ENCODE measurements at regions of chr11 and their contacts with region 1.

Region 1: GRCh38 chr11:117226388-117227385 is 5.2 kb downstream of the PCSK7 start:
- DNase-seq: peak; percentile 58
- H3K4me3 ChIP-seq: no peak overlapping the region
- H3K27ac ChIP-seq: no peak overlapping the region
- H3K4me1 ChIP-seq: peaks cover 22% of the 10 kb centered on the region
- H3K27me3 ChIP-seq: no peaks in the 10 kb centered on the region
- CTCF ChIP-seq: peak; percentile 68 to 81

Region 2: DNA sequence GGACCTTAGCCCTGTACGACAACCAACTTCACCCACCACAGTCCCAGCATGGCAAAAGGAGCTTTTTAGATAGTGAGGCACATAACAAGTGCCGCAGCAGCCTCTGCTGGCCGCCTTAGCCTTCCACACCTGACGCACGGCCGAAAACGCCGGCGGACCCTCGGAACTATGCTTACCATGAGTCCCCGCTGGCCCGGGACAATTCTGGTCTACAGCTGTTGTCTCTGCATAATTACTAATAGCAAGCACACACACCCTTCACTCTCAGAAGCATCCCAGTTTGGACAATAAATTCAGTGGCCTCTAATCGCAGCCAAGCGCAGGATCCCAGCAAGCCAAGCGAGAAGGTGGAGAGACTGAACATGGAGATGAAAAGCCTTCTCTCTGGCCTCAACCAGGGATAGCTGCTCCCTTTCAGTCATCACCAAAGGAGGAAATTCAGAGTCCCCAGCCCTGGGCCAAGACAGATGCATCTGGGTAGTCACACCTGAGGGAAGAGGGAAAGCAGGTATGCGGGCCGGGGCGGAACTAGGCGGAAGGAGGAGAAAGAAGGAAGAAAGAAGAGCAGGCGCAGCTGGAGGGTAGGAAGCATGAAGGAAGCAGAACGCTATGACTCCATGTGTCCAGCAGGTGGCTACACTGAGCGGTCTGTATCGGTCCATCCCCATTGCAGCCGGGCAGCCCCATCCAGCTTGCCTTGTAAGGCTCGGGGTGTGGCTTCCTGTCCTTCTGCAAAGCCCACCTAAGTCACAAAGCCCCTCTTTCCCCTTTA is 494.2 kb before region 1 on chr11:
- CTCF ChIA-PET with region 1: no interaction called
- dilution Hi-C with region 1: no loop called
- in situ Hi-C with region 1: no loop called
- intact Hi-C with region 1: loop called (anchors 1 kb)
- DNase-seq: peak; percentile 40
- H3K4me3 ChIP-seq: no peak overlapping the region
- H3K27ac ChIP-seq: no peak overlapping the region
- H3K4me1 ChIP-seq: no peaks in the 10 kb centered on the region
- H3K27me3 ChIP-seq: peaks cover 4% of the 10 kb centered on the region
- CTCF ChIP-seq: peak; percentile 84 to 88

Region 3: DNA sequence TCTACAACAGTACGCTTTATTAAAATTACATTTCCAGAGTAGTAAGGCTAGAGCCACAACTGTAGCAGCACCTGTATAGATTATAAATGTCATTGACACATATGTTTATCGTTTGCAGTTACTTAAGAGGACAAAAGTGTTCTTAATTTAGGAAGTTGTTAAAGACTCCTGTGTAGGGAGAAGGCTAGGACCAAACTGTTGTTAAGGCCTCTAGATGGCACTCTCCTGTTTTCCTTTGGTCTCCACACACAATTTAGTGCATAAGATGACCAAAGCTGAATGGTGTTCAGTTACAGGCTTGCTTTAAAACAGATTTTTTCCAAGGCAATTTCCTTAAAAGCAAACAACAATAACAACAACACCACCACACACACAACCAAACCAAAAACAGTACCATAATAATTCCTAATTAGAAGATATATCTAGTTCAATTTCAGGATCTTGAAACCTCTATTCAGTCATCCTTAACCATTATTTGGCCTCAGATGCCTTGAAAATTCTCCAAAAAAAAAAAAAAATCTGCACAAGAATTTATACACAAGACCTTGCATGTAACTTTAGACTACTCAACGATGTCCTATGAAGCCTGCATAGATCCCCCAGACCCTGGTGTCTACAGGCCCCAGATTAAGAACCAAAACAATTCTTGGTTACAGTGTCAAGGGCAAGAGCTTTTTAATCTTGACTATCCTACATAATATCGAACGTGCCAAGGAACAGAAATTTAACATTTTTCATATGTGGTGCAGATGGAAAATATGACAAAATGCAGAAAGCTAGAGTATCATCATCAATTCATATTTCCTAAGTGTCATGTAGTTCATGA is 346.7 kb before region 1 on chr11:
- CTCF ChIA-PET with region 1: no interaction called
- dilution Hi-C with region 1: no loop called
- in situ Hi-C with region 1: no loop called
- intact Hi-C with region 1: loop called (anchors 1 kb)
- DNase-seq: peak; percentile 58
- H3K4me3 ChIP-seq: no peak overlapping the region
- H3K27ac ChIP-seq: no peak overlapping the region
- H3K4me1 ChIP-seq: peaks cover 16% of the 10 kb centered on the region
- H3K27me3 ChIP-seq: no peaks in the 10 kb centered on the region
- CTCF ChIP-seq: peak; percentile 78 to 86

Region 4: DNA sequence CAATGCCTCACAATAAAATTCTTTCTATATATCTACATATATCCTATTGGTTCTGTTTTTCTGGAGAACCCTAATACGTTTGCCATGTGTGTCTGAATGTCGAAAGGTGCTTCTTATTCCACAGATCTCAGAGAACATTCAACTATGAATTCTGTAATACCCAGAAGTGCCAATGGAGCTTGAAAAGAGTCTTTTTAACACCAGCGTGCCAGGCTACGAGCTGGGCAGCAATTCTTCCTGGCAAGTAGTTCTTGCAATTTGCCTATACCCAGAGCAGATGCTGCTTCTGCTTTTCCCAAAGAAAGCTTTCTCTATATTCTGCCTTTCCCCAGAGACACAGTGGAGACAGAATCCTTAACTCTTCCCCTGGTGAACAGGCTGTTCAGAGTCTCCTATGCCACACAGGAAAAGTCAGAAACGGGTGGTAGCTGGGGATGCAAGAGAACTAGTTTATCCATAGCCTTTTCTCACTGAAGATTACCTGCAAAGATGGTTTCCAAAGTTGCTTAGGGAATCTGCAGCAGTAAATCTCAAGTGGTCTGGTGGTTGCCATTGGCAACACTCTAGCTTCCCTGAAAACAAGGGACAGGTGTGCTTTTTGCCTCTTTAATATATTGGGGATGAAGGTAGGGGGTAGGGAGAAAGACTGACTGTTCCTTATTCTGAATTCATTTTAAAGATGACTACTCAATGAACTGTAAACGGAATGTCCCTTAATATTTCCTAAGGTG is 99.4 kb before region 1 on chr11:
- CTCF ChIA-PET with region 1: no interaction called
- dilution Hi-C with region 1: loop called (anchors 5 kb)
- in situ Hi-C with region 1: no loop called
- intact Hi-C with region 1: loop called (anchors 5 kb)
- DNase-seq: no peak
- H3K4me3 ChIP-seq: no peak overlapping the region
- H3K27ac ChIP-seq: no peak overlapping the region
- H3K4me1 ChIP-seq: no peaks in the 10 kb centered on the region
- H3K27me3 ChIP-seq: no peaks in the 10 kb centered on the region
- CTCF ChIP-seq: no peak

Region 5: GRCh38 chr11:117178210-117179034 is 48.3 kb before region 1 on chr11 and contains the start of gene SIDT2:
- CTCF ChIA-PET with region 1: interaction called, 11 read pairs
- dilution Hi-C with region 1: loop called (anchors 5 kb)
- in situ Hi-C with region 1: no loop called
- intact Hi-C with region 1: loop called (anchors 1 kb)
- DNase-seq: peak; percentile 85
- H3K4me3 ChIP-seq: peak within 1 kb of the TSS; percentile 74 to 80 (median 74)
- H3K27ac ChIP-seq: peak within 1 kb of the TSS; percentile 42
- H3K4me1 ChIP-seq: peaks cover 25% of the 10 kb centered on the region
- H3K27me3 ChIP-seq: no peaks in the 10 kb centered on the region
- CTCF ChIP-seq: no peak
- total RNA-seq, gene SIDT2: 17.2 to 30.6 TPM

Measured in mammary epithelial cell (primary cell).